ENCODE measurements at regions of chr1 and their contacts with region 1.

Region 1: DNA sequence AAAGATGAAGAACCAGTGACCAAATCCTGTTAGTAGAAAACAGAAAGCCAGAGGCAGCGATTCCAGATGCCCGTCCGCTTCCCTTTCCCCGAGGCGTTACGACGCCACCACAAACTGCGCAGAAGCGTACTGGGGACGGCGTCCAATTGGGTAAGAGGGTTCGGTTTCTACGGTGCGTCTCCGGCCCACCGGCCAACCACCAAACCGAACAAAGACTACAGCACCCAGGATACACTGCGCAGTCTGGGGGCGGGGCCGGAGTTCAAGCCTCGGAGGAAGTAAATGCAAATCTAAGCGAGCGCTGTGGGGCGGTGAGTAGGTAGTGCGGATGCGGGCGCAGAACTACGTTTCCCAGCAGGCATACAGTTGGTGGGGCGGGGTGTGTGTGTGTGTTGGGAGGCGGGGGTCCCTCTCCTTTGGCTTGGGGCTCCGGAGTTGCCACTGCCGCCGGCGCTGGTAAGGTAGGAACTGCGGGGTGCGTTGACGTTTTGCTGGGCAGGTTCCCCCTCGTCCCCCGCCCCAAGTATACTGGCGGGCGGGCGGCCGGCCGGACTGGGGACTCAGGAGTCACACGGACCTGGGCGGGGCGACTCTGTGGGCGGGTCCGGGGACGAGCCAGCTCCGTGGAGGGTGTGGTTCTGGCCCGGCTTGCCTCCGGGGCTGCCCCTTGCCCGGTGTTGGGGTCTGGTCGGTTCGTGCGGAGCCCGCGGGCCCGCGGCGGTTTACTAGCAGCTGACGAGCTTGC is at the starts of genes SWT1 and TRMT1L:
- DNase-seq: peak; percentile 99 to 100
- ATAC-seq: peak; percentile 90 to 97 (median 96)
- H3K4me3 ChIP-seq: peak within 1 kb of the TSS; percentile 85
- H3K27ac ChIP-seq: peak within 1 kb of the TSS; percentile 97
- H3K4me1 ChIP-seq: peaks cover 30% of the 10 kb centered on the region
- H3K27me3 ChIP-seq: no peaks in the 10 kb centered on the region
- CTCF ChIP-seq: no peak
- total RNA-seq, gene SWT1: 3.6 to 6.1 (median 4.8) TPM
- total RNA-seq, gene TRMT1L: 27.9 to 39.4 (median 30.5) TPM

Region 2: GRCh38 chr1:183891158-183891856 is 1265.7 kb before region 1 on chr1:
- intact Hi-C with region 1: loop called in 1 of 2 experiments (anchors 5 kb)
- DNase-seq: no peak
- ATAC-seq: no peak
- H3K4me3 ChIP-seq: no peak overlapping the region
- H3K27ac ChIP-seq: peak overlapping the region; percentile 68
- H3K4me1 ChIP-seq: peaks cover 42% of the 10 kb centered on the region
- H3K27me3 ChIP-seq: no peaks in the 10 kb centered on the region
- CTCF ChIP-seq: no peak

Region 3: GRCh38 chr1:184754476-184755225 is 402.4 kb before region 1 on chr1 and contains the start of gene EDEM3:
- intact Hi-C with region 1: loop called in 1 of 2 experiments (anchors 2 kb)
- DNase-seq: peak; percentile 99
- ATAC-seq: peak; percentile 95 to 98 (median 96)
- H3K4me3 ChIP-seq: peak within 1 kb of the TSS; percentile 95
- H3K27ac ChIP-seq: peak within 1 kb of the TSS; percentile 93
- H3K4me1 ChIP-seq: peaks cover 22% of the 10 kb centered on the region
- H3K27me3 ChIP-seq: no peaks in the 10 kb centered on the region
- CTCF ChIP-seq: no peak
- total RNA-seq, gene EDEM3: 19.2 to 36.4 (median 27.9) TPM

Region 4: GRCh38 chr1:184805667-184806295 is 351.2 kb before region 1 on chr1:
- intact Hi-C with region 1: loop called in 1 of 2 experiments (anchors 2 kb)
- DNase-seq: peak; percentile 89 to 93
- ATAC-seq: peak; percentile 79 to 89 (median 80)
- H3K4me3 ChIP-seq: no peak overlapping the region
- H3K27ac ChIP-seq: peak overlapping the region; percentile 84
- H3K4me1 ChIP-seq: peaks cover 47% of the 10 kb centered on the region
- H3K27me3 ChIP-seq: no peaks in the 10 kb centered on the region
- CTCF ChIP-seq: peak; percentile 94

Region 5: DNA sequence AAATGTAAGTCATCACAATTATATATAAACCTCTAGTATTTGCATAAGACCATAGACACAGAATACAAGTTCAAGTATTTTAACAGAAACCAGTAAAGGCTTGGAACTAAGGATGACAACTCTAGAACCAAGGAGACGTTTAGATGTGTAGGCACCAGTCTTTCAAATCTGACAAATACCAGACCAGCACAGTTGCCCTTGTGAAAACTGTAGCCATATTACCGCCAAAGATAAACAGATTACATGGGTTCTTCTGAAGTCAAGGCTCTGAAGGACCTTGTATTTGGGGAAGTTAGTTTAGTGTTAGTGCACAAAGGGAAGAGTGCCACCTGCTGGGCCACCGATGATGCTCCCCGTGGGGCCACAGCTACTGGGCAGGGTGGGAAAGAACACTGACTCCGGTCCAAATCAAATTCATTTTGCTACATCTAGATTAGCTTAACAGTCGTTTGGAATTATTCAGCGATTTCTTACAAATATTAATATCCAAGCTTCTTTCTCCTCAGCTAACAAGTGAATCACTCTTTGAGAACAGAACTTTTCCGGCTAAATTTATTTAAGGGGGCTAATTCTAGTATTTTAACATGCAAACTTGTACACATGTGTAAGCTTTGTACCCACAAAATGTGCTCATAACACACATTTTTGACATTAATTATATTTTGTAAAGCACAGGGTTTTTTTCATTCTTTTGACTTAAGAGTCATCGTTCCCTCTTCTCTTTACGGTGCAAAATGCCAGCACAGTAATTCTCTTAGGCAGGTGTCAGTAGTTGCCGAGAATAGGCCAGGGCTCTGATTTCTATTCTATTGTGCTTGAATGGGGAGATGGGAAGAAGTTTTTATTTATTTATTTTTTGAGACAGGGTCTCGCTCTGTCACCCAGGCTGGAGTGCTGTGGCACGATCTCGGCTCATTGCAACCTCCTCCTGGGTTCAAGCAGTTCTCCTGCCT is 174.7 kb before region 1 on chr1:
- intact Hi-C with region 1: loop called in 1 of 2 experiments (anchors 10 kb)
- DNase-seq: peak; percentile 76 to 88
- ATAC-seq: peak; percentile 97 to 100 (median 98)
- H3K4me3 ChIP-seq: peak overlapping the region; percentile 34
- H3K27ac ChIP-seq: no peak overlapping the region
- H3K4me1 ChIP-seq: peaks cover 9% of the 10 kb centered on the region
- H3K27me3 ChIP-seq: no peaks in the 10 kb centered on the region
- CTCF ChIP-seq: peak; percentile 98

Region 6: GRCh38 chr1:185044981-185045813 is 111.8 kb before region 1 on chr1 and contains the start of gene RNF2:
- intact Hi-C with region 1: loop called in 1 of 2 experiments (anchors 5 kb)
- DNase-seq: peak; percentile 86 to 90
- ATAC-seq: peak; percentile 91 to 95 (median 94)
- H3K4me3 ChIP-seq: peak within 1 kb of the TSS; percentile 88
- H3K27ac ChIP-seq: peak within 1 kb of the TSS; percentile 86
- H3K4me1 ChIP-seq: peaks cover 29% of the 10 kb centered on the region
- H3K27me3 ChIP-seq: no peaks in the 10 kb centered on the region
- CTCF ChIP-seq: no peak
- total RNA-seq, gene RNF2: 8.1 to 15.3 (median 11.1) TPM

Measured in psoas muscle (tissue), 8 donors.